Endothelial cell of umbilical vein (primary cell): ENCODE measurements at regions of chr15 and their contacts with region 1.

Region 1: GRCh38 chr15:39358441-39359041 is 222.3 kb upstream of the THBS1 start:
- DNase-seq: peak; percentile 97
- H3K4me3 ChIP-seq: no peak overlapping the region
- H3K27ac ChIP-seq: peak overlapping the region; percentile 100
- H3K4me1 ChIP-seq: peaks cover 63% of the 10 kb centered on the region
- H3K27me3 ChIP-seq: no peaks in the 10 kb centered on the region
- CTCF ChIP-seq: no peak
- POLR2A ChIP-seq: peak; percentile 56

Region 2: GRCh38 chr15:38707802-38708671 is 650.5 kb before region 1 on chr15:
- CTCF ChIA-PET with region 1: interaction called, 4 read pairs
- POLR2A ChIA-PET with region 1: no interaction called
- dilution Hi-C with region 1: no loop called
- intact Hi-C with region 1: loop called (anchors 2 kb)
- DNase-seq: peak; percentile 87
- H3K4me3 ChIP-seq: no peak overlapping the region
- H3K27ac ChIP-seq: no peak overlapping the region
- H3K4me1 ChIP-seq: peaks cover 10% of the 10 kb centered on the region
- H3K27me3 ChIP-seq: no peaks in the 10 kb centered on the region
- CTCF ChIP-seq: peak; percentile 71 to 78
- POLR2A ChIP-seq: no peak

Region 3: DNA sequence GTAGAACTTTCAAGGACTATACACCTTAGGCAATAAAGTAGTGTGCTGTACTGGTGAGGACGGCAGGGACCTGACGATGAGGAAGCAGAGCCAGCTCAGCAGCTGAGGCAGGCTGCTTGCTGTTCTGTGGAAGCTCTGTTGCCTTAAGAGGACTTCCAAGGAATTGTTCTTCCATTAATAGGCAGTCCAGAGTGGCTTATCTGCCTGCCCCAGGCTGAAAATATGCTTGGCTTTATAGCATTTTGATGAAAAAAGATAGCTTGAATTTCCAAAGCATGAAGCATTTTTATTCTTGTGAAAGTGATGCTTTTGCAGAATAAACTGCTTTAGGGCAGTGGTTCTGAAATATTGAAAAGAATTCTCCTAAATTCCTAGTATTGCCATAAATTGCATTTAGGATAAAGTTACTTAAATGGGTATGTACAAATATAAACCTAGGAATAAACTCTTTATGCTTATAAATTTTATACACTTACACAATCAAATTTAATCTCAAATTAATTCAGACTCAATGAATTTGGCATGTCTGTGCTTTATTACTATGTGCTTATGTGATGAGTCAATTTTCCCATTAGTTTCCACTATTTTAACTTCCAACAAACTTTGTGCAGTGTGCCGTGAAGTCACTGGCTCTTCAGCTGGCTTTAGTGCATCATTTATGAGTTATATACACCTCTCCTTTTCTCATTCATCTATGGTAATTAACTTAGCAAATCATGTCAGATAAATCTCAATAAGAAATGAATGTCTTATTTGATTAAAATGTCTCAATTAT is 562.9 kb before region 1 on chr15:
- CTCF ChIA-PET with region 1: no interaction called
- POLR2A ChIA-PET with region 1: no interaction called
- dilution Hi-C with region 1: no loop called
- intact Hi-C with region 1: no loop called
- DNase-seq: peak; percentile 14
- H3K4me3 ChIP-seq: no peak overlapping the region
- H3K27ac ChIP-seq: no peak overlapping the region
- H3K4me1 ChIP-seq: no peaks in the 10 kb centered on the region
- H3K27me3 ChIP-seq: peaks cover 0 to 4% of the 10 kb centered on the region in 2 experiments
- CTCF ChIP-seq: no peak
- POLR2A ChIP-seq: no peak

Region 4: GRCh38 chr15:38894243-38894948 is 464.1 kb before region 1 on chr15:
- CTCF ChIA-PET with region 1: no interaction called
- POLR2A ChIA-PET with region 1: no interaction called
- dilution Hi-C with region 1: no loop called
- intact Hi-C with region 1: loop called (anchors 1 kb)
- DNase-seq: peak; percentile 91
- H3K4me3 ChIP-seq: no peak overlapping the region
- H3K27ac ChIP-seq: peak overlapping the region; percentile 92
- H3K4me1 ChIP-seq: peaks cover 49% of the 10 kb centered on the region
- H3K27me3 ChIP-seq: no peaks in the 10 kb centered on the region
- CTCF ChIP-seq: no peak
- POLR2A ChIP-seq: no peak

Region 5: GRCh38 chr15:39075311-39075710 is 283.2 kb before region 1 on chr15:
- CTCF ChIA-PET with region 1: no interaction called
- POLR2A ChIA-PET with region 1: no interaction called
- dilution Hi-C with region 1: no loop called
- intact Hi-C with region 1: no loop called
- DNase-seq: no peak
- H3K4me3 ChIP-seq: no peak overlapping the region
- H3K27ac ChIP-seq: no peak overlapping the region
- H3K4me1 ChIP-seq: peaks cover 6% of the 10 kb centered on the region
- H3K27me3 ChIP-seq: no peaks in the 10 kb centered on the region
- CTCF ChIP-seq: no peak
- POLR2A ChIP-seq: no peak

Region 6: GRCh38 chr15:39140060-39140604 is 218.4 kb before region 1 on chr15:
- CTCF ChIA-PET with region 1: interaction called, 5 read pairs
- POLR2A ChIA-PET with region 1: interaction called, 4 read pairs
- dilution Hi-C with region 1: no loop called
- intact Hi-C with region 1: loop called (anchors 1 kb)
- DNase-seq: peak; percentile 100
- H3K4me3 ChIP-seq: no peak overlapping the region
- H3K27ac ChIP-seq: peak overlapping the region; percentile 96
- H3K4me1 ChIP-seq: peaks cover 34% of the 10 kb centered on the region
- H3K27me3 ChIP-seq: no peaks in the 10 kb centered on the region
- CTCF ChIP-seq: no peak
- POLR2A ChIP-seq: peak; percentile 90

Region 7: DNA sequence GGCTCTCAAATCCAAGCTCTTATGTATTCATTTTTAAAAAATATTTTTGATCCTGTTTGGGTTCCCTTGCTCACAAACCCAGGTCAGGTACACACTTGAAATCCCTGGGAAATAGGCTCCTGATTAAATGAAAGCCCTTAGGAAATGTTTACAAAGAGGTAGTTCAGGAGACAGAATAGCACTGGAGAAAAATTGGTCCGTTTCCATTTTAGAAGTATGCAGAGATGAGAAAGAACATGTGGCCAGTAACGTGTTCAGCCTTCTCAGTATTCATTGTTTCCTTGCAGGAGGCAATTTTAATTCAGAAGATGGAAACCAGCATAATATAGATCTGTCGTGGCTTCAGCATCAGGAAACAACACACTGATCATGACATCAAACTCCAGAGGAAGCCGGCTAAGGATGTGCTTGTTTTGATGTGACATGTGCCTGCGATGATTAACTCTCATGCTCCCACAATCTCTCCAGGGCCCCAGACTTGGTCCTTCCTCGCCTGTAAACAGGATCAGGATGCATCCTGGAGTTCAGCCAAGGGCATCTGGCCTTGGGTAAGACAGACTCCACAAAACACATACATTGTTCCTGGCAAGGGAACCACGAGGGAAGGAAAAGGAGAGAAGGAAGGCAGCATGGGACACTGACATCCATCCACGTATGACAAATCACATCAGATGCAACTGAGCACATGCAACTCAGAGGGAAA is 128.2 kb before region 1 on chr15:
- CTCF ChIA-PET with region 1: no interaction called
- POLR2A ChIA-PET with region 1: no interaction called
- dilution Hi-C with region 1: no loop called
- intact Hi-C with region 1: loop called (anchors 1 kb)
- DNase-seq: peak; percentile 100
- H3K4me3 ChIP-seq: no peak overlapping the region
- H3K27ac ChIP-seq: peak overlapping the region; percentile 93
- H3K4me1 ChIP-seq: peaks cover 49% of the 10 kb centered on the region
- H3K27me3 ChIP-seq: no peaks in the 10 kb centered on the region
- CTCF ChIP-seq: no peak
- POLR2A ChIP-seq: no peak

Region 8: DNA sequence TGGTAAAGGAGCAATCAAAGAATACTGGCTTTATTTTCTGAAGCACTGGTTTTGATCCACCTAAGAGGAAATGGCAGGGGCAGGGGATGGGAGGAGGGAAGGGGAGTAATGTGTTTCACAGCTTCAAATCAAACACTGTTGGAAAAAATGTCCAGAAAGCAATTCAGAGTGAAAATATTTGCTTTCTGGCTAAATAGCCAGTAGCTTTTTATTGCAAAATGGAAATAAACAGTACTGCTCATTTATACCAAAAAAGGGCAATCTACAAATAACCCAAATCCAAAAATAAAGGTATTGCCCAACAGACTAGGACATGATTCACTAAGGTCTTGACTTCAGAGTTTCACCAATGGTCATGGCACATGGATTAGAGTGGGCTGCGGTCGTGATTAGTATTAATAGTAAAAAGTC is 56.9 kb before region 1 on chr15:
- CTCF ChIA-PET with region 1: no interaction called
- POLR2A ChIA-PET with region 1: no interaction called
- dilution Hi-C with region 1: no loop called
- intact Hi-C with region 1: loop called (anchors 1 kb)
- DNase-seq: peak; percentile 37
- H3K4me3 ChIP-seq: no peak overlapping the region
- H3K27ac ChIP-seq: peak overlapping the region; percentile 92
- H3K4me1 ChIP-seq: peaks cover 31% of the 10 kb centered on the region
- H3K27me3 ChIP-seq: no peaks in the 10 kb centered on the region
- CTCF ChIP-seq: no peak
- POLR2A ChIP-seq: no peak

Region 9: GRCh38 chr15:39624806-39625205 is 266.3 kb after region 1 on chr15:
- CTCF ChIA-PET with region 1: no interaction called
- POLR2A ChIA-PET with region 1: no interaction called
- dilution Hi-C with region 1: no loop called
- intact Hi-C with region 1: no loop called
- DNase-seq: peak; percentile 98
- H3K4me3 ChIP-seq: no peak overlapping the region
- H3K27ac ChIP-seq: peak overlapping the region; percentile 87
- H3K4me1 ChIP-seq: peaks cover 49% of the 10 kb centered on the region
- H3K27me3 ChIP-seq: no peaks in the 10 kb centered on the region
- CTCF ChIP-seq: no peak
- POLR2A ChIP-seq: peak; percentile 76